ENCODE measurements at regions of chr2 and their contacts with region 1.

Region 1: GRCh38 chr2:97663965-97664635 is at the start of gene ACTR1B:
- DNase-seq: peak; percentile 96
- ATAC-seq: peak; percentile 86
- H3K4me3 ChIP-seq: peak within 1 kb of the TSS; percentile 83 to 88
- H3K27ac ChIP-seq: peak within 1 kb of the TSS; percentile 92
- H3K4me1 ChIP-seq: peaks cover 6 to 20% of the 10 kb centered on the region in 2 experiments; a peak in 3 of 4 replicates
- H3K27me3 ChIP-seq: no peaks in the 10 kb centered on the region
- CTCF ChIP-seq: peak; percentile 59 to 75 (median 59); a peak in 5 of 6 replicates
- POLR2A ChIP-seq: peak; percentile 5
- RAD21 ChIP-seq: no peak
- total RNA-seq, gene ACTR1B: 42.8 TPM

Region 2: DNA sequence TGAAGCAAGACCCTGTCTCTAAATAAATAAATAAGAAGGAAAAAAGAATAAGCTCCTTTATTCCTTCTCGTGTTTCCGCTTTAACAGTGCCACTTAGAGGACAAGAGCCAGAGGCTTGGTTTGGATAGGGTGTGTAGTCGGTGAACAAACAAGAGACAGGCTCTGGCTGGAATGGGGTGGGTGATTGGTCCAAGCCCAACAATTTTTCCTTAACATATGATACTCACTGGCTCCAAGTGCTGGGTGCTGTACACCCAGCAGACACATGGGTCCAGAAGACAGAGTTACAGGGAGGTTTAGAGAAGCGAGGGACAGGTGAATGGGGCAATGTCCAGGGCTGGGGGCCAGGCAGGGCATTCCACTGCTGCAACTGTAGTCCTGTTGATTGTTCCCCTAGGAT is 1250.8 kb before region 1 on chr2:
- CTCF ChIA-PET with region 1: no interaction called
- POLR2A ChIA-PET with region 1: no interaction called
- RAD21 ChIA-PET with region 1: no interaction called
- intact Hi-C with region 1: no loop called
- DNase-seq: no peak
- ATAC-seq: peak; percentile 62
- H3K4me3 ChIP-seq: peak overlapping the region; percentile 33 to 47
- H3K27ac ChIP-seq: no peak overlapping the region
- H3K4me1 ChIP-seq: peaks cover 0 to 21% of the 10 kb centered on the region in 2 experiments; a peak in 1 of 4 replicates
- H3K27me3 ChIP-seq: no peaks in the 10 kb centered on the region
- CTCF ChIP-seq: no peak
- POLR2A ChIP-seq: no peak
- RAD21 ChIP-seq: no peak

Region 3: DNA sequence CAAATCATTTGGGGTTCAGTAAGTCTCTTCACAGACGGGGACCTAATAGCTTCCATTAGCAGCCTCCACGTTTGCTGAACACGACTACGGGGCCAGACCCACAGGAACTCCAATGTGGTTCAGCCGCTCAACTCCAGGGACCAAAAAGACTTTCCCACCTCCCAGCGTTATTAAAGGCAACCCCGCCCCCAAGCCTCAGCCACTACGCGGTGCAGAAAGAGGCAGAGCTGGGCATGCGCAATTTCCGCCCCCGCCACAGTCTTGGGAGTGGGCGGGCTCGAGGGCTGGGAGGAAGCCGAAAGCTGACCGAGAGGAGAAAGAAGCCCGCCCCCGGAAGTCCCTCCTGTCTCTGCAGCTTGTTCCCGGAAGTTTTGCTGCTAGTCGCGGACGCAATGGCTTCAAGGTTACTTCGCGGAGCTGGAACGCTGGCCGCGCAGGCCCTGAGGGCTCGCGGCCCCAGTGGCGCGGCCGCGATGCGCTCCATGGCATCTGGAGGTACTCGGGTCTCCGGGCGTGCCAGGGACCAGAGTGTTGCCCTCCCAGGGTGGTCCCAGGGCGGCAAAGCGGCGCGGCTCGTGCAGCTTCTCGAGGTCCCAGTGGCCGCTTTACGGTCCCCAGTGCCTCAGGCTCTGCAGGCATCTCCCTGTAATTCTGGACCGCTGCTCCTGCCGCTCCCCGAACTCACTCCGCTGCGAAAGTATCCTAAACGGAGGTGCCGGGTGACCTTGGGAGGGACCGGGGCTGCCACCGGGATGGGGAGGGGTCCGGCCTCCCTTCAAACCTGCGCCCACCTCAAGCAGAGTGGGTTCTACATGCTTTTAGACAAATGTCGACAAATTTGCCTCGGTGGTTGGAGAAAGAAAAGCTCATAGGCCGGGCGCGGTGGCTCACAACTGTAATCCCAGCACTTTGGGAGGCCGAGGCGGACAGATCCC is 18.1 kb before region 1 on chr2 and contains the start of gene COX5B:
- CTCF ChIA-PET with region 1: interaction called, 12 read pairs
- POLR2A ChIA-PET with region 1: interaction called, 22 read pairs
- RAD21 ChIA-PET with region 1: interaction called in 1 of 2 experiments, 3 read pairs
- intact Hi-C with region 1: no loop called
- DNase-seq: peak; percentile 87
- ATAC-seq: peak; percentile 96
- H3K4me3 ChIP-seq: peak within 1 kb of the TSS; percentile 97 to 98
- H3K27ac ChIP-seq: peak within 1 kb of the TSS; percentile 88
- H3K4me1 ChIP-seq: peaks cover 8 to 17% of the 10 kb centered on the region in 2 experiments
- H3K27me3 ChIP-seq: no peaks in the 10 kb centered on the region
- CTCF ChIP-seq: no peak
- POLR2A ChIP-seq: peak; percentile 91
- RAD21 ChIP-seq: no peak
- total RNA-seq, gene COX5B: 283 TPM